Mammary epithelial cell (primary cell): ENCODE measurements at regions of chr17 and their contacts with region 1.

Region 1: DNA sequence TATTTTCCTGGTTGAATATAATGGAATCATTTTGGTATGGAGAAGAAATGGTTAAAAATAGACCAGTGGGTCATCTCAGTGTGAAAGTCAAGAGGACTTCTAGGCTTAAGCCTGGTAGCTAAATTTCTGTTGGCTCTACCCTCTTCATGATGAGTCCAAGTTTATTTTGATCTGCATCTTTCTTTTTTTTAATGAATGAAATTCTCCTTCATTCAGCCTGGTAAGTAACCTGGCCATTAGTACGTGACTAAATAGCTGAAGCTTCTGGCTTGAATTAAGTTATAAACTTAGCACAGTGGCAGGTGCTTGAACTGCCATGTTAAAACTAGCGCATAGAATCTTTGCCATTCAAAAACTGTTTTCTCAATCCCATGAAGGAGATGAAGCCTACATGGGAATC is 28.0 kb downstream of the NF1 start:
- DNase-seq: no peak
- H3K4me3 ChIP-seq: no peak overlapping the region
- H3K27ac ChIP-seq: no peak overlapping the region
- H3K4me1 ChIP-seq: no peaks in the 10 kb centered on the region
- H3K27me3 ChIP-seq: no peaks in the 10 kb centered on the region
- CTCF ChIP-seq: no peak

Region 2: GRCh38 chr17:31175237-31175636 is 52.5 kb after region 1 on chr17:
- CTCF ChIA-PET with region 1: no interaction called
- dilution Hi-C with region 1: loop called (anchors 5 kb)
- in situ Hi-C with region 1: no loop called
- intact Hi-C with region 1: no loop called
- DNase-seq: no peak
- H3K4me3 ChIP-seq: no peak overlapping the region
- H3K27ac ChIP-seq: no peak overlapping the region
- H3K4me1 ChIP-seq: no peaks in the 10 kb centered on the region
- H3K27me3 ChIP-seq: no peaks in the 10 kb centered on the region
- CTCF ChIP-seq: no peak

Region 3: DNA sequence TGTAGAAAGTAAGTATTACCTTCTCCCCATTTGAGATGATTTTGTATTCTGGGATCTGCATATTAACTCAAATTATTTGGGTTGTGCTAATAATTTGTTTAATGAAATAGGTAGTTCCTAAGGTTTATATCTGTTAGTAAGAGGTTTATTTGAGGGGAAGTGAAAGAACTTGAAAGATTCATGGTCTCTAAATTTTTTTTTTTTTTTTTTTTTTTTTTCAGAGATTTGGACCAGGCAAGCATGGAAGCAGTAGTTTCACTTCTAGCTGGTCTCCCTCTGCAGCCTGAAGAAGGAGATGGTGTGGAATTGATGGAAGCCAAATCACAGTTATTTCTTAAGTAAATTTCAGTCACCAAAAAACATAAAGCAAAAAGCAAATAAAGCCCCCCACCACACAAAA is 109.1 kb after region 1 on chr17:
- CTCF ChIA-PET with region 1: no interaction called
- dilution Hi-C with region 1: loop called (anchors 10 kb)
- in situ Hi-C with region 1: no loop called
- intact Hi-C with region 1: no loop called
- DNase-seq: no peak
- H3K4me3 ChIP-seq: no peak overlapping the region
- H3K27ac ChIP-seq: no peak overlapping the region
- H3K4me1 ChIP-seq: no peaks in the 10 kb centered on the region
- H3K27me3 ChIP-seq: no peaks in the 10 kb centered on the region
- CTCF ChIP-seq: no peak